HepG2 (cell line): ENCODE measurements at regions of chr1 and their contacts with region 1.

Region 1: GRCh38 chr1:40951943-40952743 is 27.4 kb upstream of the CTPS1 start:
- DNase-seq: peak; percentile 61
- ATAC-seq: peak; percentile 83
- H3K4me3 ChIP-seq: no peak overlapping the region; a peak in 1 of 6 replicates
- H3K27ac ChIP-seq: no peak overlapping the region
- H3K4me1 ChIP-seq: peaks cover 29% of the 10 kb centered on the region
- H3K27me3 ChIP-seq: peaks cover 0 to 15% of the 10 kb centered on the region in 2 experiments; a peak in 2 of 5 replicates
- CTCF ChIP-seq: peak; percentile 98
- EP300 ChIP-seq: no peak
- POLR2A ChIP-seq: no peak
- RAD21 ChIP-seq: peak; percentile 99

Region 2: DNA sequence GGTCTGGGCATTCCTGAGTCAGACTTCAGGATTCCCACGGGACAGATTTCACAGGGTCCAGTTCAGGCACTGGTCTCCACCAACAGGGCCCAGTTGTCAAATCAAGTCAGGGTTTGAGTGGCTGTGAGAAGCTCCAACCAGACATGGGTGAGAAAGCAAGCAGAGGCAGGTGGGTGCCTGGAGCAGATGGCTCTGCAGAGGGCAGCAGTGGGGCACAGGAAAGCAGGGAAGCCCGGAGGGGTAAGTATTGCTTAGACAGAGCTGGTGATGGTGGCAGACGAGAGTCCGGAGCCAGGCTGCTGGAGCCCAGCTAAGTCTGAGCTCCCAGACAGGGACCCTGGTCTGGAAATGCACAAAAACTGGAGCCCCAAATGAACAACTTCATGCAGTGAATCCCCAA is 327.1 kb before region 1 on chr1:
- CTCF ChIA-PET with region 1: no interaction called
- POLR2A ChIA-PET with region 1: no interaction called
- in situ Hi-C with region 1: loop called (anchors 10 kb)
- intact Hi-C with region 1: no loop called
- DNase-seq: peak; percentile 18
- ATAC-seq: peak; percentile 88
- H3K4me3 ChIP-seq: no peak overlapping the region
- H3K27ac ChIP-seq: no peak overlapping the region
- H3K4me1 ChIP-seq: no peaks in the 10 kb centered on the region
- H3K27me3 ChIP-seq: no peaks in the 10 kb centered on the region
- CTCF ChIP-seq: peak; percentile 65
- EP300 ChIP-seq: no peak
- POLR2A ChIP-seq: no peak
- RAD21 ChIP-seq: peak; percentile 65

Region 3: GRCh38 chr1:41003640-41004220 is 51.6 kb after region 1 on chr1:
- CTCF ChIA-PET with region 1: no interaction called
- POLR2A ChIA-PET with region 1: no interaction called
- in situ Hi-C with region 1: no loop called
- intact Hi-C with region 1: loop called (anchors 1 kb)
- DNase-seq: peak; percentile 87
- ATAC-seq: peak; percentile 97
- H3K4me3 ChIP-seq: no peak overlapping the region
- H3K27ac ChIP-seq: no peak overlapping the region
- H3K4me1 ChIP-seq: peaks cover 7% of the 10 kb centered on the region; the same call in 1 of the 2 replicates
- H3K27me3 ChIP-seq: no peaks in the 10 kb centered on the region
- CTCF ChIP-seq: peak; percentile 59
- EP300 ChIP-seq: no peak
- POLR2A ChIP-seq: no peak
- RAD21 ChIP-seq: no peak

Region 4: DNA sequence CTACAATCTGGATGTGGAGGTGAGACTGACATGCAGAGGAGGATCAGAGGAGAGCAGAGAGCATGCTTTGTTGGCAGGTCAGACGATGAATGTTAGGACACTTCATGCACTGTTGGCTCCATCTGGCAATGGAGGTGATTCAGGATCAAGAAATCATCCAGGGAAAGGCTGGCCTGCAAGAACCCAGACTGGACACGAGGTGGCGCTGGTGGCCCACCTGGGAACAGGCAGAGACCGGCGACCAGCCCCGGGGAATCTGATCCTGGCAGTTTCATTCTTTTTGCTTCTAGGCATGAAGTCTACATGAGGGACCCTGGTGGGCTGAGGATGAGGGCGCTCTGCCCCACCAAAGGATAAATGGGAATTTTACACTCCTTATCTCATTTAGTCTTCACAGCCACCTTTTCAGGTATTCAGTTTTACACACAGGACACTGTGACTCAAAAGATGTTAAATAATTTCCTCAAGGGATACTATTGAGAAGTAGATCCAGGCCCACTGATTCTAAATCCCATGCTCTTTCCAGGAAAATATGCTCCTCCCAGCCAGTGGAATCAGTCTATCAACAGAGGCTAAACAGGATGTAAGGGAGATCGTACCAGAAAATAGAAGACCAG is 316.1 kb after region 1 on chr1:
- CTCF ChIA-PET with region 1: no interaction called
- POLR2A ChIA-PET with region 1: no interaction called
- in situ Hi-C with region 1: no loop called
- intact Hi-C with region 1: no loop called
- DNase-seq: peak; percentile 35
- ATAC-seq: peak; percentile 88
- H3K4me3 ChIP-seq: no peak overlapping the region
- H3K27ac ChIP-seq: no peak overlapping the region
- H3K4me1 ChIP-seq: no peaks in the 10 kb centered on the region
- H3K27me3 ChIP-seq: no peaks in the 10 kb centered on the region
- CTCF ChIP-seq: peak; percentile 94
- EP300 ChIP-seq: no peak
- POLR2A ChIP-seq: no peak
- RAD21 ChIP-seq: peak; percentile 91

Region 5: DNA sequence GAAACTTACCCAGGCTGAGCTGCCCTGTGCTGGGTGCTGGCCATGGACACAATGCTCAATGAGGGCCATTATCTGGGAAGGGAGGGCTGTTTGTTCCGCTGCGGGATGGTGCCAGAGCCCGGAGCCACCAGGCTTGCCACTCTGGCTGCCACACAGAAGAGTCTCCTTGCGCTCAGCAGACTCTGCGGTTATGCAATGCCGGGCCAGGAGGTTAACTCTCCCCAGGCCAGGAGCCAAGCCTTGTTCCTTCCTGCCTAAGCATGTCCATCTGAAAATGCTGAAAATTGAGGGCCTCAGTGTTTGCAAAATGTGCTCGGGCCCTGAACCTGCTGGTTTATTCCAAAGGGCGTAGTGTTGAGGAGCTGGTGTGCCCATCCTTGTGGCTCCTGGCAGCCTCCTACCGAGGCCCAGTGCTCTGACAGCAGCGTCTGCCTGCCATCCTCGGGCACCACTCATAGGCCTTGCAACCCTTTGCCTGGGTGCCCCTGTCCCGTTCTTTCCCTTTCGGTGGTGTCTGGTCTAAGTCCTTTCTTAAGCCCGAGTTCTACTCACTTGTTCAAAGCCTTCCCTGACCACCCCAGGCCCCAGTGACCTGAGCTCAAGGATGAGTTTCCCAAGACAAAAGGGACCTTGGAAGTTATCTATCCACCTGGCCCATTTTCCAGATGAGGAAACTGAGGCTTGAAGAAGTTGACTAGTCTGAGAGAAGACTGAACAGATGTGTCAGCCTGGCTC is 666.1 kb after region 1 on chr1:
- CTCF ChIA-PET with region 1: no interaction called
- POLR2A ChIA-PET with region 1: no interaction called
- in situ Hi-C with region 1: no loop called
- intact Hi-C with region 1: no loop called
- DNase-seq: no peak
- ATAC-seq: no peak
- H3K4me3 ChIP-seq: no peak overlapping the region
- H3K27ac ChIP-seq: no peak overlapping the region
- H3K4me1 ChIP-seq: peaks cover under 1% of the 10 kb centered on the region; the same call in 1 of the 2 replicates
- H3K27me3 ChIP-seq: peaks cover 0 to 4% of the 10 kb centered on the region in 2 experiments; a peak in 1 of 5 replicates
- CTCF ChIP-seq: no peak
- EP300 ChIP-seq: no peak
- POLR2A ChIP-seq: no peak
- RAD21 ChIP-seq: no peak